MCF 10A (cell line): ENCODE measurements at regions of chr17 and their contacts with region 1.

Region 1: GRCh38 chr17:47604598-47604927 is 45.2 kb upstream of the KPNB1 start:
- DNase-seq: peak; percentile 16
- H3K4me3 Mint-ChIP-seq: no peak overlapping the region
- H3K27ac Mint-ChIP-seq: peak overlapping the region; percentile 36
- H3K4me1 Mint-ChIP-seq: peaks cover 17% of the 10 kb centered on the region
- H3K27me3 Mint-ChIP-seq: no peaks in the 10 kb centered on the region
- CTCF ChIP-seq: no peak

Region 2: DNA sequence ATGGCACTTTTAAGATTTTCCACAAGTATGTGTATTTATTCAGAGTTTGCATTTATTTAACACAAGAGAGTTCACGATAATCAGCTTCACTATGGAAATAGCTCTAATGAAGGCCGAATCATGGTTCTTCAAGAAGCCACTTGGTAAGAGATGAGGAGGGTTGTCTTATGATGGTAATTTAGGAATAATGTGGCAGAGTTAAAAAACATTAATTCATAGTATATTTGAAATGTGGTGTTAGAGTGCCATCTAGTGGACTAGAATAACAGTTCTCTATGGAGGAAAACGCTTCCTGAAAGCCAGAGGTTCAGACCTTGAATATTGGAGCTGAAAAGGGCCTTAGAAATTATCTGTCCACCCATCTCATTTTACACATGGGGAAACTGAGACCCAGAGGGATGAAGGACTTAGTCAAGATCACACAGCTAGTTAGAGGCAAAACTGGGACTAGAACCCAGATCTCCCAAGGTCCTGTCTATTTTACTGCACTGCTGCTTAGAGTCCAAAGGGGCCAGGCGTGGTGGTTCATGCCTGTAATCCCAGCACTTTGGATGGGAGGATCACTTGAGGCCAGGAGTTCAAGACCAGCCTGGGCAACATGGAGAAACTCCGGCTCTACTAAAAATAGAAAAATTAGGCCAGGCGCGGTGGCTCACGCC is 11.3 kb after region 1 on chr17:
- CTCF ChIA-PET with region 1: interaction called, 24 read pairs
- POLR2A ChIA-PET with region 1: interaction called, 3 read pairs
- intact Hi-C with region 1: no loop called
- DNase-seq: peak; percentile 62
- H3K4me3 Mint-ChIP-seq: no peak overlapping the region
- H3K27ac Mint-ChIP-seq: no peak overlapping the region
- H3K4me1 Mint-ChIP-seq: peaks cover 8% of the 10 kb centered on the region
- H3K27me3 Mint-ChIP-seq: no peaks in the 10 kb centered on the region
- CTCF ChIP-seq: peak; percentile 58

Region 3: GRCh38 chr17:48671697-48672171 is 1067.2 kb after region 1 on chr17:
- CTCF ChIA-PET with region 1: no interaction called
- POLR2A ChIA-PET with region 1: no interaction called
- intact Hi-C with region 1: no loop called
- DNase-seq: peak; percentile 75
- H3K4me3 Mint-ChIP-seq: peak overlapping the region; percentile 75
- H3K27ac Mint-ChIP-seq: no peak overlapping the region
- H3K4me1 Mint-ChIP-seq: no peaks in the 10 kb centered on the region
- H3K27me3 Mint-ChIP-seq: peaks cover 22% of the 10 kb centered on the region
- CTCF ChIP-seq: peak; percentile 87